ENCODE measurements at regions of chr3 and their contacts with region 1.

Region 1: DNA sequence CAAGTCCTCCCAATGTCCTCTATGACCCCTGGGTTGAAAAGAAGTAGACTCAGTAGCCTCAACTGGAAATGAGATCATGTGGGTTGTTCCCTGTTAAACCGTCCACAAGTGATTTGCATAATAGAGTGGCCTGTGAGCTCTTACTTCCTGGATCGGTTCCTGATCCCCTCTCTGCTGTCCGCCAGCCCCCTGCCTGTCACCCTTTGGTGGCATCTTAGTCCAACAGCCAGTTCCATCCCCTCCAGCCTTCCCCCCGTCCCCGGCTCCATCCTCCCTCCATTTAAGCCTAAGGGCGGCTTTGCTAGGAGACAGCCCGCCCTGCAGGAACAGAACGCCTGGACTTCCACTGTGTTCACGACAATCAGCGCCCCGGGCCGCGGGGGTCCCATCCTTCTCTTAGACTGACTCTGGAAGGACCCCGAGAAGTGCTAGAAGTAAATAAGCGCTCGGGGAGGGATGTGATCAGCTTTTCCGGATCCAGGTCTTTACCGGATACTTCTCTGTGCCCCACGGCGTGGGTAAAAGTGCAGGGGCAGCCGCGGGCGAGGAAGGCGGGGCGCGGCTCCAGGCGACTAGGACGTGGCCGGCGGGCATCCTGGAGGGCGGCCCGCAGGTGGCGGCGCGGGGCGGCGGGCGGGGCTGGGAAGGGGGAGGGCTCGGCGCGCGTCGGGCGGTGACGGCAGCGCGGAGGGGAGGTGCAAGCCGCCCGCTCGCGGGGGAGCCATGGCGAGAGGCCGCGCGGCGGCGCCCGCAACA is 51.2 kb upstream of the ULK4 start:
- DNase-seq: peak; percentile 77 to 92 (median 89)
- ATAC-seq: peak; percentile 88 to 91
- H3K4me3 ChIP-seq: peak overlapping the region; percentile 83
- H3K27ac ChIP-seq: peak overlapping the region; percentile 57
- H3K4me1 ChIP-seq: peaks cover 4% of the 10 kb centered on the region
- H3K27me3 ChIP-seq: no peaks in the 10 kb centered on the region

Region 2: DNA sequence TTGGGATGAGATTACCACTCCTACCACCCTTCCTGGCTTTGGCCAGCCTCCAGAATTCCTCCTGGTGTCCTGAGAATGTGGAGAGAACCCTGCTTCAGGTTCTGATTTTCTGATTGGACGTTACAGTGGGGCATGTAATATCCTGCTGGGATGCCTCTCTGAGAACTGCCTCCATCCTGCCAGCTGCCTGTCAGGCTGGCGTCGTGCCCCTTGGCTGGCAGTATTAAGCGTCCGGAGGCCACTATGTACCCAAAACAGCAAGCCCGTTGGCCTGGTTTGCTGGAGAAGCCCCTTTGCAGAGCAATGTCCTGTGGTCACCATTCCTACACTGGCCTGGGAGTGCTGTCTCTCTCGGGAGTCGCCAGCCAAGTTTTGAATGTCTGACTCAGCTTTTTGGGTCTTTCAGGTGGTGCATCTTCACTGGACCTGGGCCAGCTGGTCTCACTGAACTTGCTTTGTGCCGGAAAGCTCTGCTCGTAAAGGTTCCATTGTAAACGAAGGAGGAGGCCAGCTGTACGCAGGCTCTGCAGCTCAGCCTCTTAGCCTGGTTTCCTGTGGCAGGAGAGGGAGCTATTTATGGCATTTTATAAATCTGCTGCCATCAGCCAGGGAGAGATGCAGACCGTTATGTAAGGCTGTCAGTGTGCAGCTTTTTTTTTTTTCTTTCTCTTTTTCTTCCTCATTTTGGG is 58.9 kb after region 1 on chr3:
- intact Hi-C with region 1: loop called in 1 of 4 experiments (anchors 5 kb)
- DNase-seq: peak; percentile 59 to 89 (median 89)
- ATAC-seq: peak; percentile 80 to 81
- H3K4me3 ChIP-seq: peak overlapping the region; percentile 34
- H3K27ac ChIP-seq: peak overlapping the region; percentile 98
- H3K4me1 ChIP-seq: peaks cover 29% of the 10 kb centered on the region
- H3K27me3 ChIP-seq: no peaks in the 10 kb centered on the region

Region 3: DNA sequence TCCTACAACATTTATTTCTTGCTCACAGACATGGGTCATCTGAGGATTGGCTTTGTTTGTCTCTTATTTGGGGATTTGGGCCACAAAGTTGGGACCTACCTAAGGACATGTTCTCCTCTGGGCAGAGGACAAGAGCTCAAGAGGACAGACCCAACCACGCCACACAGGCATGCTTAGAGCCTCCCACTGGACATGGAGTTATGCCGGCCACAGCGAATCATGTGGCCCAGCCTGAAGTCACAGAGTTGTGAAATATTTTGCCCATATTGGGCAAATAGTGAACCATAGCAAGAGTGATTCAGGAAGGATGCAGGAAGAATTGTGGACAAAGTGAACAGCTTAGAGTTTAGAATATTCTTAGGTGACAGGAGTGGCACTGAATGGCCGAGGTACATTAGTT is 87.9 kb after region 1 on chr3:
- intact Hi-C with region 1: loop called (anchors 5 kb)
- DNase-seq: peak; percentile 71 to 84 (median 77)
- ATAC-seq: peak; percentile 82 to 85
- H3K4me3 ChIP-seq: no peak overlapping the region
- H3K27ac ChIP-seq: peak overlapping the region; percentile 87
- H3K4me1 ChIP-seq: peaks cover 30% of the 10 kb centered on the region
- H3K27me3 ChIP-seq: no peaks in the 10 kb centered on the region

Region 4: GRCh38 chr3:42190701-42191462 is 177.8 kb after region 1 on chr3:
- intact Hi-C with region 1: loop called in 1 of 4 experiments (anchors 10 kb)
- DNase-seq: peak in 1 of 3 donors; percentile 64
- ATAC-seq: peak; percentile 45 to 48
- H3K4me3 ChIP-seq: no peak overlapping the region
- H3K27ac ChIP-seq: no peak overlapping the region
- H3K4me1 ChIP-seq: peaks cover 5% of the 10 kb centered on the region
- H3K27me3 ChIP-seq: no peaks in the 10 kb centered on the region